Heart left ventricle (tissue), 16 donors: ENCODE measurements at regions of chr19 and their contacts with region 1.

Region 1: DNA sequence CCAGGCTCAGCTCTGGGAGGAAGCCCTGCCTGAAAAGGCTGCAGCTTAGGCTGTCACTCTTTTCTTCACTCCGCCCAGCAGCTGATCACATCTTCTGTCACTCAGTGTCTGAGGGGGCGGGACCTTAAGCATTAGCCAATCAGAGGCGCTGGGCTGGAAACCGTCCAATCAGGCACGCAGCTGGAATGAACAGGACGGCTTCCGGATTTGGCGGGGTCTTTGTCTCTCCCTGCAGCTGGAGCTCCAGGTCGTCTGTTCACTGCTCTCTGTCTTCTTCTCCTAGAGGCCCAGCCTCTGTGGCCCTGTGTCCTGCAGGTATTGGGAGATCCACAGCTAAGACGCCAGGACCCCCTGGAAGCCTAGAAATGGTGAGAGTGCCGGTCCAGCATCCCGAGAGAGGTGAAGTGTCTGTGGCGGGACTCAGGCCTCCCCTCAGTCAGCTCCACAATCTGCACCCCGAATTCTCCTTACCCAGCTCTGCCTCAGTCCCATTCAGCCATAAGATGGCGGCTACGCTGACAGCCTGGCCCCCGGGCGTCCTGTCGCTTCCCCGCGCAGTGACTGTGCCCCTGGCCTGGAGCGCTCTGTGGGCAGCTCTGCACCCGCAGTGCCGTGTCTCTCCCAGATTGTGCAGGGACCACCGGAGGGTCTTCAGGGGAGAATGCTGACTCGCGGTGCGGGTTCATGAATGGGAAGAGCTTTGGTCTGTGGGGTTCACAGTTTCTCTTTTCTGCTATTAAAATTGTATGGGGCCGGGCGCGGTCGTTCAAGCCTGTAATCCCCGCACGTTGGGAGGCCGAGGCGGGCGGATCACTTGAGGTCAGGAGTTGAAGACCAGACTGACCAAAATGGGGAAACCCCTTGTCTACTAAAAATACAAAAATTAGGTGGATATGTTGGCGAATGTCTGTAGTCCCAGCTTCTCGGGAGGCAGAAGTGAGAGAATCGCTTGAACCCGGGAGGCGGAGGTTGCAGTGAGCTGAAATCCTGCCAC is at the start of gene ZNF66:
- DNase-seq: peak; percentile 96 to 99 (median 97)
- ATAC-seq: peak; percentile 100
- H3K4me3 ChIP-seq: peak within 1 kb of the TSS; percentile 58 to 96 (median 76)
- H3K27ac ChIP-seq: peak within 1 kb of the TSS in 9 of 12 donors; percentile 11 to 62 (median 43)
- H3K4me1 ChIP-seq: peaks cover 0 to 14% (median 3%) of the 10 kb centered on the region in 12 donors
- H3K27me3 ChIP-seq: no peaks in the 10 kb centered on the region
- CTCF ChIP-seq: no peak
- POLR2A ChIP-seq: peak in 1 of 2 donors; percentile 82
- total RNA-seq, gene ZNF66: 0.35 to 3.7 (median 1.5) TPM

Region 2: DNA sequence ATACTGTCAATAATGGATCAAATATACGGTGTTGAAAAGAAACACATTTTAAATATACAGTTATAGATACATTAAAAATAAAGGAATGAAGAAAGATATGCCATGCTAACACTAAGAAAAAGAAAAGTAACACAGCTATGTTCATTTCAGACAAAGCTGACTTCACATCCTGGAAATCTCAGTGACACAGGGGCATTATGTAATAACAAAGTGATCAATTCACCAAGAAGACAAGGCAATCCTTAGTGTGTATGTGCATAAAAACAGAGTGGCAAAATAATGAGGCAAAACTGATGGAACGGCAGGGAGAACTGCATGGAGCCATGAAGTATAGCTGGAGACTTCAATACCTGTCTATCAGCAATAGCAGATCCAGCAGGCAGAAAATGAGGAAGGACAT is 1056.6 kb before region 1 on chr19:
- intact Hi-C with region 1: no loop called
- DNase-seq: no peak
- ATAC-seq: no peak
- H3K4me3 ChIP-seq: no peak overlapping the region
- H3K27ac ChIP-seq: no peak overlapping the region
- H3K4me1 ChIP-seq: no peaks in the 10 kb centered on the region
- H3K27me3 ChIP-seq: no peaks in the 10 kb centered on the region
- CTCF ChIP-seq: no peak
- POLR2A ChIP-seq: no peak

Region 3: GRCh38 chr19:20565321-20566018 is 210.9 kb before region 1 on chr19 and contains the start of gene ZNF737:
- intact Hi-C with region 1: loop called in 2 of 10 experiments (anchors 10 kb)
- DNase-seq: peak; percentile 96 to 98 (median 97)
- ATAC-seq: peak; percentile 95 to 99 (median 98)
- H3K4me3 ChIP-seq: peak within 1 kb of the TSS; percentile 46 to 87 (median 70)
- H3K27ac ChIP-seq: peak within 1 kb of the TSS; percentile 51 to 94 (median 89)
- H3K4me1 ChIP-seq: peaks cover 0 to 17% (median 7%) of the 10 kb centered on the region in 12 donors
- H3K27me3 ChIP-seq: no peaks in the 10 kb centered on the region
- CTCF ChIP-seq: peak in 10 of 12 donors; percentile 17 to 57 (median 38)
- POLR2A ChIP-seq: peak in 1 of 2 donors; percentile 77
- total RNA-seq, gene ZNF737: 2.7 to 8.8 (median 5.3) TPM